Naive thymus-derived CD4-positive, alpha-beta T cell (primary cell): ENCODE measurements at regions of chr17 and their contacts with region 1.

Region 1: GRCh38 chr17:68346448-68346847 is 55.2 kb downstream of the ARSG start:
- DNase-seq: peak; percentile 26 to 66 (median 50)
- ATAC-seq: peak; percentile 79
- H3K4me3 ChIP-seq: peak overlapping the region; percentile 37
- H3K4me3 Mint-ChIP-seq: peak overlapping the region; percentile 68 to 88 (median 81)
- H3K27ac ChIP-seq: peak overlapping the region; percentile 70
- H3K27ac Mint-ChIP-seq: peak overlapping the region; percentile 91 to 98 (median 96)
- H3K4me1 ChIP-seq: peaks cover 68 to 73% of the 10 kb centered on the region in 2 donors
- H3K4me1 Mint-ChIP-seq: peaks cover 58 to 80% (median 76%) of the 10 kb centered on the region in 7 donors
- H3K27me3 ChIP-seq: no peaks in the 10 kb centered on the region
- H3K27me3 Mint-ChIP-seq: no peaks in the 10 kb centered on the region

Region 2: GRCh38 chr17:68184816-68185436 is 161.5 kb before region 1 on chr17:
- CTCF ChIA-PET with region 1: no interaction called
- POLR2A ChIA-PET with region 1: no interaction called
- intact Hi-C with region 1: loop called in 1 of 2 experiments (anchors 5 kb)
- DNase-seq: peak in 7 of 9 donors; percentile 57 to 75 (median 64)
- ATAC-seq: peak; percentile 87
- H3K4me3 ChIP-seq: peak overlapping the region; percentile 29
- H3K4me3 Mint-ChIP-seq: peak overlapping the region; percentile 69 to 89 (median 76)
- H3K27ac ChIP-seq: peak overlapping the region; percentile 39
- H3K27ac Mint-ChIP-seq: peak overlapping the region; percentile 60 to 93 (median 89)
- H3K4me1 ChIP-seq: peaks cover 39 to 48% of the 10 kb centered on the region in 2 donors
- H3K4me1 Mint-ChIP-seq: peaks cover 22 to 62% (median 55%) of the 10 kb centered on the region in 7 donors
- H3K27me3 ChIP-seq: no peaks in the 10 kb centered on the region
- H3K27me3 Mint-ChIP-seq: peaks cover 0 to 4% (median 0%) of the 10 kb centered on the region in 5 donors

Region 3: GRCh38 chr17:68314916-68315535 is 31.4 kb before region 1 on chr17:
- CTCF ChIA-PET with region 1: interaction called, 3 read pairs
- POLR2A ChIA-PET with region 1: no interaction called
- intact Hi-C with region 1: loop called in 1 of 2 experiments (anchors 2 kb)
- DNase-seq: peak in 4 of 9 donors; percentile 20 to 40 (median 24)
- ATAC-seq: peak; percentile 47
- H3K4me3 ChIP-seq: peak overlapping the region; percentile 22
- H3K4me3 Mint-ChIP-seq: peak overlapping the region; percentile 52 to 83 (median 70)
- H3K27ac ChIP-seq: no peak overlapping the region
- H3K27ac Mint-ChIP-seq: peak overlapping the region; percentile 4 to 82 (median 53)
- H3K4me1 ChIP-seq: peaks cover 42% of the 10 kb centered on the region in 2 donors
- H3K4me1 Mint-ChIP-seq: peaks cover 40 to 82% (median 61%) of the 10 kb centered on the region in 7 donors
- H3K27me3 ChIP-seq: no peaks in the 10 kb centered on the region
- H3K27me3 Mint-ChIP-seq: no peaks in the 10 kb centered on the region

Region 4: GRCh38 chr17:68356520-68356919 is 10.1 kb after region 1 on chr17:
- CTCF ChIA-PET with region 1: interaction called, 3 read pairs
- POLR2A ChIA-PET with region 1: interaction called, 20 read pairs
- intact Hi-C with region 1: loop called (anchors 1 kb)
- DNase-seq: peak in 8 of 9 donors; percentile 67 to 86 (median 80)
- ATAC-seq: peak; percentile 98
- H3K4me3 ChIP-seq: peak overlapping the region; percentile 33
- H3K4me3 Mint-ChIP-seq: peak overlapping the region; percentile 73 to 86 (median 80)
- H3K27ac ChIP-seq: peak overlapping the region; percentile 24
- H3K27ac Mint-ChIP-seq: peak overlapping the region; percentile 24 to 91 (median 82)
- H3K4me1 ChIP-seq: peaks cover 54 to 56% of the 10 kb centered on the region in 2 donors
- H3K4me1 Mint-ChIP-seq: peaks cover 43 to 69% (median 62%) of the 10 kb centered on the region in 7 donors
- H3K27me3 ChIP-seq: no peaks in the 10 kb centered on the region
- H3K27me3 Mint-ChIP-seq: no peaks in the 10 kb centered on the region

Region 5: GRCh38 chr17:68381076-68381900 is 34.8 kb after region 1 on chr17:
- CTCF ChIA-PET with region 1: interaction called, 3 read pairs
- POLR2A ChIA-PET with region 1: no interaction called
- intact Hi-C with region 1: loop called in 1 of 2 experiments (anchors 5 kb)
- DNase-seq: no peak
- ATAC-seq: peak; percentile 62
- H3K4me3 ChIP-seq: no peak overlapping the region
- H3K4me3 Mint-ChIP-seq: no peak overlapping the region
- H3K27ac ChIP-seq: no peak overlapping the region
- H3K27ac Mint-ChIP-seq: peak overlapping the region in 1 of 9 donors; percentile 25
- H3K4me1 ChIP-seq: peaks cover 17% of the 10 kb centered on the region in 2 donors
- H3K4me1 Mint-ChIP-seq: peaks cover 19 to 28% (median 27%) of the 10 kb centered on the region in 7 donors
- H3K27me3 ChIP-seq: no peaks in the 10 kb centered on the region
- H3K27me3 Mint-ChIP-seq: peaks cover 0 to 3% (median 0%) of the 10 kb centered on the region in 5 donors

Region 6: DNA sequence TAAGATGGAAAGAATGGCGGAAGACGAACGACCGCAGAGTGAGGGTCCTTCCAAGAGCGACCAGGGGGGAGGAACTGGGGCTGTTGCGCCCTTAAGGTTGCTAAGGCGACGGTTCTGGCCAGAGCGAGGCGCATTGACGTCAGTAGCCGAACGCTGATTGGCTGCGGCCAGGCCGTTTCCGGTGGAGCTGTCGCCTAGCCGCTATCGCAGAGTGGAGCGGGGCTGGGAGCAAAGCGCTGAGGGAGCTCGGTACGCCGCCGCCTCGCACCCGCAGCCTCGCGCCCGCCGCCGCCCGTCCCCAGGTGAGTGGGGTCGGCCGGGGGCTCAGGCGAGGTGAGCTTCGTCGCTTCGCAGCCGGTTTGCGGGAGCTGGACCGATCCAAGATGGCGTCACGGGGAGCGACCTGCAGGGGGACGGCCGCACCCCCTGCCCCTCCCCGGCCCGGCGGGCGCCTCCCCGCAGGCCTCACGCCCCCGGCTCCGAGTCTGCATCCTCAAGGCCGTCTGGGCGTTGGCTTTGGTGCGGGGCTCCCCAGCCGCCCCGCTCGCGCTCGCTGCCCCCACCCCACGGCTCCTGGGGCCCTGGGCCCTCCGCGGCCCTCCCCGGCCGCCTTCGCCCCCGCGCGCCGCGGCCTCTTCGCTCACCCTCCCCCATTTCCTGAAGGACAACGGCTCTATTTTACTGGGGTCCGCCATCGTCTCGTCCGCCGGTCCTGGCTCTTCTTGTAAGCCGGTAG is 166.0 kb after region 1 on chr17 and contains the start of gene PRKAR1A:
- CTCF ChIA-PET with region 1: no interaction called
- POLR2A ChIA-PET with region 1: no interaction called
- intact Hi-C with region 1: loop called in 1 of 2 experiments (anchors 5 kb)
- DNase-seq: peak; percentile 84 to 96 (median 94)
- ATAC-seq: peak; percentile 92
- H3K4me3 ChIP-seq: peak within 1 kb of the TSS; percentile 97
- H3K4me3 Mint-ChIP-seq: peak within 1 kb of the TSS; percentile 89 to 100 (median 100)
- H3K27ac ChIP-seq: peak within 1 kb of the TSS; percentile 98
- H3K27ac Mint-ChIP-seq: peak within 1 kb of the TSS; percentile 91 to 100 (median 100)
- H3K4me1 ChIP-seq: peaks cover 13 to 22% of the 10 kb centered on the region in 2 donors
- H3K4me1 Mint-ChIP-seq: peaks cover 34 to 74% (median 51%) of the 10 kb centered on the region in 7 donors
- H3K27me3 ChIP-seq: no peaks in the 10 kb centered on the region
- H3K27me3 Mint-ChIP-seq: no peaks in the 10 kb centered on the region
- total RNA-seq, gene PRKAR1A: 115 to 224 (median 156) TPM